ENCODE measurements at regions of chr13 and their contacts with region 1.

Region 1: GRCh38 chr13:106484537-106485193 is 50.8 kb downstream of the EFNB2 start:
- DNase-seq: no peak
- H3K4me3 Mint-ChIP-seq: no peak overlapping the region
- H3K27ac Mint-ChIP-seq: no peak overlapping the region
- H3K4me1 Mint-ChIP-seq: no peaks in the 10 kb centered on the region
- H3K27me3 Mint-ChIP-seq: peaks cover 23% of the 10 kb centered on the region

Region 2: GRCh38 chr13:104773775-104774174 is 1710.9 kb before region 1 on chr13:
- intact Hi-C with region 1: loop called (anchors 5 kb)
- DNase-seq: no peak
- H3K4me3 Mint-ChIP-seq: no peak overlapping the region
- H3K27ac Mint-ChIP-seq: no peak overlapping the region
- H3K4me1 Mint-ChIP-seq: no peaks in the 10 kb centered on the region
- H3K27me3 Mint-ChIP-seq: no peaks in the 10 kb centered on the region

Region 3: GRCh38 chr13:106432636-106433035 is 52.0 kb before region 1 on chr13:
- intact Hi-C with region 1: no loop called
- DNase-seq: no peak
- H3K4me3 Mint-ChIP-seq: no peak overlapping the region
- H3K27ac Mint-ChIP-seq: no peak overlapping the region
- H3K4me1 Mint-ChIP-seq: no peaks in the 10 kb centered on the region
- H3K27me3 Mint-ChIP-seq: peaks cover 2% of the 10 kb centered on the region

Measured in activated T-helper 1 cell treated with anti-CD3 and anti-CD28 coated beads, Interleukin-12 subunit alpha, Interleukin-12 subunit beta, Interleukin-2, Interleukin-4 antibody, amounts not matched to agents 30 ng/mL and 10 ng/mL and 1 ng/mL, durations not matched to agents 14 hours and 24 hours and 36 hours (primary cell).